Caco-2 (cell line): ENCODE measurements at regions of chr10 and their contacts with region 1.

Region 1: DNA sequence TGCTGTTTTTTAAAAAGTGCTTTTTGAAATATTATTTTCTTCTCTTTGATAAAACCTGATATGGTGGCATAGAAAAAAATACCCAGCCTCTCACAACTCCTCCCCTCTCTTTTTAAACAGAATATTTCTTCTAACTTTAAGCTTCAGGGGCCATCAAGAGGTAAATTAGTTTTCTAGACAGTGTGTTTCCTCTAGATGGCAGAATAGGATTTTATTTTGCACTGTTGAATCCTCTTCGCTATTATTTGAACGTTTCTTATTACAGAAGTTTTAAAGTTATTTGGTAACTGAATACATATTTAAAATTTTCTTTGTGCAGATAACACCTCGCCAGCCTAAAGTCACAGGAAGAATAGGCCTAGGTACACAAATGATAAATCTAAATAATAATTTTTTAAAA is 30.3 kb downstream of the ARL5B start:
- DNase-seq: no peak
- H3K4me3 ChIP-seq: no peak overlapping the region
- H3K4me3 Mint-ChIP-seq: no peak overlapping the region
- H3K27ac Mint-ChIP-seq: no peak overlapping the region
- H3K4me1 ChIP-seq: no peaks in the 10 kb centered on the region
- H3K4me1 Mint-ChIP-seq: peaks cover 7% of the 10 kb centered on the region
- H3K27me3 ChIP-seq: no peaks in the 10 kb centered on the region
- H3K27me3 Mint-ChIP-seq: no peaks in the 10 kb centered on the region
- CTCF ChIP-seq: peak; percentile 59 to 64

Region 2: GRCh38 chr10:18350340-18350739 is 339.2 kb before region 1 on chr10:
- CTCF ChIA-PET with region 1: interaction called, 10 read pairs
- POLR2A ChIA-PET with region 1: no interaction called
- intact Hi-C with region 1: no loop called
- DNase-seq: no peak
- H3K4me3 ChIP-seq: no peak overlapping the region
- H3K4me3 Mint-ChIP-seq: no peak overlapping the region
- H3K27ac Mint-ChIP-seq: no peak overlapping the region
- H3K4me1 ChIP-seq: no peaks in the 10 kb centered on the region
- H3K4me1 Mint-ChIP-seq: peaks cover 6% of the 10 kb centered on the region
- H3K27me3 ChIP-seq: no peaks in the 10 kb centered on the region
- H3K27me3 Mint-ChIP-seq: peaks cover 9% of the 10 kb centered on the region
- CTCF ChIP-seq: no peak

Region 3: DNA sequence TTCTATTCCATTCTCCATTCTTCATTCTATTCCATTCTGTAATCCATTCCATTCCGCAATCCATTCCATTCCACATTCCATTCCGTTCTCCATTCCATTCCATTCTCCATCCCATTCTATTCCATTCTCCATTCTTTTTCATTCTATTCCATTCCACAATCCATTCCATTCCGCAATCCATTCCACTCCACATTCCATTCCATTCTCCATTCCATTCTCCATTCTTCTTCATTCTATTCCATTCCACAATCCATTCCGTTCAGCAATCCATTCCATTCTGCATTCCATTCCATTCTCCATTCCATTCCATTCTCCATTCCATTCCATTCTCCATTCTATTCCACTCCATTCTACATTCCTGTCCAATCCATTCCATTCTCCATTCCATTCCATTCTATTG is 123.3 kb before region 1 on chr10:
- CTCF ChIA-PET with region 1: no interaction called
- POLR2A ChIA-PET with region 1: no interaction called
- intact Hi-C with region 1: no loop called
- DNase-seq: no peak
- H3K4me3 ChIP-seq: no peak overlapping the region
- H3K4me3 Mint-ChIP-seq: no peak overlapping the region
- H3K27ac Mint-ChIP-seq: no peak overlapping the region
- H3K4me1 ChIP-seq: no peaks in the 10 kb centered on the region
- H3K4me1 Mint-ChIP-seq: no peaks in the 10 kb centered on the region
- H3K27me3 ChIP-seq: no peaks in the 10 kb centered on the region
- H3K27me3 Mint-ChIP-seq: no peaks in the 10 kb centered on the region
- CTCF ChIP-seq: no peak

Region 4: GRCh38 chr10:19021175-19021574 is 331.7 kb after region 1 on chr10:
- CTCF ChIA-PET with region 1: no interaction called
- POLR2A ChIA-PET with region 1: no interaction called
- intact Hi-C with region 1: loop called (anchors 5 kb)
- DNase-seq: peak in 1 of 2 experiments; percentile 59
- H3K4me3 ChIP-seq: no peak overlapping the region
- H3K4me3 Mint-ChIP-seq: no peak overlapping the region
- H3K27ac Mint-ChIP-seq: peak overlapping the region; percentile 87
- H3K4me1 ChIP-seq: peaks cover 25% of the 10 kb centered on the region
- H3K4me1 Mint-ChIP-seq: peaks cover 24% of the 10 kb centered on the region
- H3K27me3 ChIP-seq: no peaks in the 10 kb centered on the region
- H3K27me3 Mint-ChIP-seq: no peaks in the 10 kb centered on the region
- CTCF ChIP-seq: no peak

Region 5: DNA sequence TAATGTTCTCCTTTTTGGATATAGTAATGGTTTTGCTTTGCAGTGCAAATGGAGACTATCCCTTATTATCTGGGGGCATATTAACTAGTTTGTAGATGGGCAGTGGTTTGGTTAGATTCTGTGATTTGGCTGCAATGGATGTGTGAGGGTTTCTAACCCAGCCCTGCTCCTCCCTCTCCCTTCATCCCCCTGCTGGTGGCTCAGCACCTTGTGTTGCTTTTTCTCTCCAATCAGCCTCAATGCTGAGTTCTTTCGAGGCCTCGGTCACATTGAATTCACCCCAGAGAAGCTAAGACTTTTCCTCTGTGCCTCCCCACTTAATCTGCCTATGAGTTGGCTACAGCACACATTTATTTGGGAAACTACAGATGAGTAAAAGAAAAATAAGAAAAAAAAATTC is 479.1 kb after region 1 on chr10:
- CTCF ChIA-PET with region 1: no interaction called
- POLR2A ChIA-PET with region 1: no interaction called
- intact Hi-C with region 1: loop called (anchors 1 kb)
- DNase-seq: peak; percentile 36 to 37
- H3K4me3 ChIP-seq: no peak overlapping the region
- H3K4me3 Mint-ChIP-seq: no peak overlapping the region
- H3K27ac Mint-ChIP-seq: no peak overlapping the region
- H3K4me1 ChIP-seq: no peaks in the 10 kb centered on the region
- H3K4me1 Mint-ChIP-seq: peaks cover 5% of the 10 kb centered on the region
- H3K27me3 ChIP-seq: no peaks in the 10 kb centered on the region
- H3K27me3 Mint-ChIP-seq: no peaks in the 10 kb centered on the region
- CTCF ChIP-seq: peak; percentile 51 to 61

Region 6: DNA sequence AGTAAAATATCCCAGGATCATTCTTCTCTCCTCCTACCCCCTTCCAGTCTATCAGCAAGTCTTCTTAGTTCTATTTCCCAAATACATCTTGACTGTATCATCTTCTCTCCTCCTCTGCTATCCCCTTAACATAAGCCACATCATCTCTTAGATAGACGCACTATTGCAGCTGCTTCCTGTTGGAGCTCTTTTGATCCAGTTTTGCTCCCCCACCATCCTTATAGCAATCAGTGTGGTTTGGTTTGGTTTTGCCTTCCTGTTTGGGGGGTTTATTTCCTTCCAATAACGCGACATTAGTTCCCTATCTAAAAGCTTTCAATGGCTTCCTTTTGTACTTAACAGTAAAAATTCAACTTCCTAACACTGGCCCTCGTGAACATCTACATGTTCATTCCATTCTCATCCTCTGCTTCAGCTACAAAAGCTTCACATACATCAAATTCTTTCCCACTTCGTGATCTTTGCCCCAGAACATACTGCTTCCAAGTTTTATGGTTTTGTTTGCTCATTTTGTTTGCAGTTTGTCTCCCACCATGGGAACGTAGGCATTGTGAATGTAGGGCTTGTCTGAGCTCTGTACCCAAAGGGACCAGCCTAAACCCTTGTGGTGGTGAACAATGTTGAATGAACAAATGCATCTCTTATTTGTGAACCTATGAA is 1093.1 kb after region 1 on chr10:
- CTCF ChIA-PET with region 1: no interaction called
- POLR2A ChIA-PET with region 1: no interaction called
- intact Hi-C with region 1: loop called (anchors 1 kb)
- DNase-seq: peak; percentile 50 to 51
- H3K4me3 ChIP-seq: no peak overlapping the region
- H3K4me3 Mint-ChIP-seq: peak overlapping the region; percentile 46
- H3K27ac Mint-ChIP-seq: peak overlapping the region; percentile 28
- H3K4me1 ChIP-seq: peaks cover 16% of the 10 kb centered on the region
- H3K4me1 Mint-ChIP-seq: peaks cover 10% of the 10 kb centered on the region
- H3K27me3 ChIP-seq: no peaks in the 10 kb centered on the region
- H3K27me3 Mint-ChIP-seq: no peaks in the 10 kb centered on the region
- CTCF ChIP-seq: no peak

Region 7: DNA sequence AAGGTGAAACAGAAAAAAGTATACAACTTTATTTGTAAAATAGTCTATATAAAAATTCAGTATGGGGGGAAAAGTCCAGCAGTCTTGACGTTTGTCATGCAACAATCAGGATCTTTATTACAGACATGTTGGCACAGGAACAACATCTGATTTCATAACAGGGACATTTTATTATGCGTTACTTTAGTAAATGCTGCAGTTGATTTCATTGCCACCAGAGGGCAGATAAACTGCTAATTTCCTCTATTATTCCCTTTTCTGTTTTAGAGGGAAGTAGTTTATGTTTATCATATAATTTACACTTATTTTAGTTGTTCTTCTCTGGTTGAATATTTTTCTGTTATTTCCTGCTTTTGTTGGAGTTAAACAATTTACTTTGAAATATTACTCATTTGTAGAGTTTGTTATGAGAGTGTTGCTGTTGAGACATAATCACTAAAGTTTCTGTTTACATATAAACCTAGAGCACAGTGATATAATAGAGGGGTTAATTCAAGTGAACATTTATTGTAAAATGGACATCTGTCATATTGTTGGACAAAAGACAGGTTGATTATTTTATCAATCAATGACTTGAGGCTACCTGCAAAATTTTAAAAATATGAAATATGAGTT is 1130.0 kb after region 1 on chr10:
- CTCF ChIA-PET with region 1: no interaction called
- POLR2A ChIA-PET with region 1: no interaction called
- intact Hi-C with region 1: loop called (anchors 10 kb)
- DNase-seq: peak in 1 of 2 experiments; percentile 52
- H3K4me3 ChIP-seq: no peak overlapping the region
- H3K4me3 Mint-ChIP-seq: no peak overlapping the region
- H3K27ac Mint-ChIP-seq: no peak overlapping the region
- H3K4me1 ChIP-seq: no peaks in the 10 kb centered on the region
- H3K4me1 Mint-ChIP-seq: no peaks in the 10 kb centered on the region
- H3K27me3 ChIP-seq: peaks cover 8% of the 10 kb centered on the region
- H3K27me3 Mint-ChIP-seq: peaks cover 17% of the 10 kb centered on the region
- CTCF ChIP-seq: peak; percentile 73 to 83